ENCODE measurements at regions of chr20 and their contacts with region 1.

Region 1: DNA sequence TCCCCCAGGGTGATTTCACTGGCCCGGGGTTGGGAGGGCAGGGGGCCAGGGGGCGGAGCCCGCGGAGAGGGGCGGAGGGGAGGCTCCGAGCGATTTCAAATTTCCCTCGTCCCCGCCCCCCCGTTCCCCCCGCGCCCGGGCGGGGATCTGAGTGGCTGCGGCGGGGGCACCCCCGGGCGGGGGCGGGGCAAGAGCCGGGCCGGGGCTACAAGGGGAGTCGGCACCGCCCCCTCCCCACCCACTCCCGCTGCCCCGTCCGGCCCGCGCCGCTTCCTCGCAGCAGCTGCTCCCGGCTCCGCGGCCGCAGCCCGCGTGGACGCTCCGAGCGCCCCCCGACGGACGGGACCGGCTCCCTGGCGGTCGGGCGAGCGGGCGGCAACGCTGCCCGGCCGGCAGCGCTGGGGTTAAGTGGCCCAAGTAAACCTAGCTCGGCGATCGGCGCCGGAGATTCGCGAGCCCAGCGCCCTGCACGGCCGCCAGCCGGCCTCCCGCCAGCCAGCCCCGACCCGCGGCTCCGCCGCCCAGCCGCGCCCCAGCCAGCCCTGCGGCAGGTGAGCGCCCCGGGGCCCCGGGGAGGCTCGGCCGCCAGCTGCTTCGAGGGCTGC is at the start of gene DNMT3B:
- DNase-seq: peak; percentile 82 to 97
- H3K4me3 ChIP-seq: peak within 1 kb of the TSS; percentile 92 to 100 (median 96)
- H3K27ac ChIP-seq: peak within 1 kb of the TSS; percentile 75
- H3K4me1 ChIP-seq: peaks cover 10 to 16% (median 13%) of the 10 kb centered on the region in 4 experiments
- H3K27me3 ChIP-seq: no peaks in the 10 kb centered on the region
- CTCF ChIP-seq: peak in 1 of 3 experiments; percentile 37; a peak in 2 of 4 replicates
- EP300 ChIP-seq: no peak
- POLR2A ChIP-seq: peak; percentile 81 to 89
- RAD21 ChIP-seq: peak in 1 of 2 experiments; percentile 37; a peak in 2 of 4 replicates
- total RNA-seq, gene DNMT3B: 1,016 and 1,038 TPM in 2 replicates

Region 2: GRCh38 chr20:32681175-32682084 is 80.8 kb before region 1 on chr20:
- CTCF ChIA-PET with region 1: interaction called, 20 read pairs
- POLR2A ChIA-PET with region 1: interaction called, 14 read pairs
- DNase-seq: peak; percentile 49 to 67
- H3K4me3 ChIP-seq: peak overlapping the region in 1 of 4 experiments; percentile 6; a peak in 1 of 8 replicates
- H3K27ac ChIP-seq: no peak overlapping the region
- H3K4me1 ChIP-seq: peaks cover 11 to 16% (median 12%) of the 10 kb centered on the region in 4 experiments
- H3K27me3 ChIP-seq: no peaks in the 10 kb centered on the region
- CTCF ChIP-seq: no peak
- EP300 ChIP-seq: no peak
- POLR2A ChIP-seq: no peak
- RAD21 ChIP-seq: no peak

Region 3: DNA sequence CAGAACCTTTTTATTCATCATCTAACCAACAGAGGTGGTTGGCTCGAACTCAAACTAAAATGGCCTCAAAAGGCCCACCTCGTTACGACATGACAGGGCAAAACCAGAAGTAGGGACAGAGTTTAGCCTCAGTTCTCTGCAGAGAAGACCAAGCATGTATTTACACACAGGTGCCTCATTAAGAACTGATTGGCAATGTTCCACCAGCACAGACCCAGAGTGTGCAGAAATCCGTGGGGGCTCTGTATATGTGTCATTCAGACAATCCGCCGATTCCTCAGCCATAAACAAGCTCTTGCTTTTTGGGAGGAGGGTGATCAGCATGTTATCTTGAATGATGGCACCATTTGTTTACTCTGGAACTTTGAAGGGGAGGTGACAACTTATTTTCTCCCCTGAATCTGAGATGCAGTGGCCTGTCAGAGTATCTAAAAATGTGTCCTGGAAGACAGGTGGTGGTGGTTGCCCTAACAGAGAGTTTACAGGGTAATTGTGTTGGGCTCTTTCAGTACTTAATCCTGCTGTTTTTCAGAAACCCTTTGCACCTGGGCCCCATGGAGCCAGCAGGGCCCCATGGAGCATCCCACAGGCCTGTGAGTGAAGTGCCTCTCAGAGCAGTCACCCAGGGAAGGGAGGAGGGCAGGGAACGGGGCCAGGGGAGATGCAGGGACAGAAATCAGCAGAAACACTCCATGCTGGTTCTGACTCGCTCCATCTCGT is 59.4 kb before region 1 on chr20:
- CTCF ChIA-PET with region 1: no interaction called
- POLR2A ChIA-PET with region 1: interaction called, 21 read pairs
- DNase-seq: no peak
- H3K4me3 ChIP-seq: no peak overlapping the region
- H3K27ac ChIP-seq: no peak overlapping the region
- H3K4me1 ChIP-seq: peaks cover 2 to 9% (median 6%) of the 10 kb centered on the region in 4 experiments
- H3K27me3 ChIP-seq: no peaks in the 10 kb centered on the region
- CTCF ChIP-seq: no peak
- EP300 ChIP-seq: no peak
- POLR2A ChIP-seq: no peak
- RAD21 ChIP-seq: peak in 1 of 2 experiments; percentile 16; a peak in 1 of 4 replicates

Region 4: GRCh38 chr20:32789896-32790750 is 27.9 kb after region 1 on chr20:
- CTCF ChIA-PET with region 1: interaction called, 7 read pairs
- POLR2A ChIA-PET with region 1: interaction called, 29 read pairs
- DNase-seq: peak in 1 of 2 experiments; percentile 78
- H3K4me3 ChIP-seq: no peak overlapping the region
- H3K27ac ChIP-seq: no peak overlapping the region
- H3K4me1 ChIP-seq: peaks cover 0 to 9% (median 2%) of the 10 kb centered on the region in 4 experiments; a peak in 4 of 7 replicates
- H3K27me3 ChIP-seq: no peaks in the 10 kb centered on the region
- CTCF ChIP-seq: peak; percentile 75 to 97 (median 96)
- EP300 ChIP-seq: no peak
- POLR2A ChIP-seq: peak in 1 of 2 experiments; percentile 74; a peak in 2 of 3 replicates
- RAD21 ChIP-seq: peak; percentile 66 to 67